Posterior vena cava (tissue), 2 donors: ENCODE measurements at regions of chr11 and their contacts with region 1.

Region 1: GRCh38 chr11:119989159-119989821 is 148.6 kb downstream of the TRIM29 start:
- DNase-seq: peak; percentile 22

Region 2: GRCh38 chr11:120030411-120030810 is 41.1 kb after region 1 on chr11:
- intact Hi-C with region 1: loop called in 1 of 2 experiments (anchors 1 kb)
- DNase-seq: peak; percentile 32

Region 3: DNA sequence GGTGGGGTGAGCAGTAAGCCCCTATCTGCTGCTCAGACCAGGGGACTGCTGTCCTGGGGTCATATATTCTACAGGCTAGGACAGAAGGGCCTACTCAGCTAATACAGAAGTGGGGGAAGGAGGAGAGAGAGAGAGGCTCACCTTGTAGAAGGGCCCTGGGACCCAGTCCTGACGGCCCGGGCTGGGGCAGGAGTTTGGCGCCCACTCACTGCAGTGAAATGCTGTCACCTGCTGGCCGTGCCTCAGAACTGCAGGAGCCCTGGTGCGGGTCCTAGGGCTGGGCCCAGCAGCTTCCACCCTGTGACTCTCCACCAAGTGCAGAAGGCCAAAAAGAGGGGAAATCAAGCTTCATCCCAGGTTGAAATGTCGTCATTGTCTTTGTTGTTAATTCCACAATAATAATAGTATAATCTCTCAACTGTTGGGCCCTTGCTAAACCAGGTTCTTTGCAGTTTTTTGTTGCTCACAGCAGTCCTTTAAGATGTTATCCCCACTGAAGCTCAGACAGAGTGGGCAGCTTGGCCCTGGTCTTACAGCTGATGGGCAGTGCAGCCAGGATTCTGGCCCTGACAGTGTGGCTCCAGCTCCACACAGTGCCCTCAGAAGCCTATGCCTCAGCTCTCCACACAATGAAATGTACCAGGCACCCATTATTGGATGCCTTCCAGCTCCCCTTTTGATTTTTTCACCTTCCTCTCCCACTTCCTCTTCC is 119.0 kb after region 1 on chr11:
- intact Hi-C with region 1: no loop called
- DNase-seq: peak; percentile 88